K562 (cell line): ENCODE measurements at regions of chr6 and their contacts with region 1.

Region 1: DNA sequence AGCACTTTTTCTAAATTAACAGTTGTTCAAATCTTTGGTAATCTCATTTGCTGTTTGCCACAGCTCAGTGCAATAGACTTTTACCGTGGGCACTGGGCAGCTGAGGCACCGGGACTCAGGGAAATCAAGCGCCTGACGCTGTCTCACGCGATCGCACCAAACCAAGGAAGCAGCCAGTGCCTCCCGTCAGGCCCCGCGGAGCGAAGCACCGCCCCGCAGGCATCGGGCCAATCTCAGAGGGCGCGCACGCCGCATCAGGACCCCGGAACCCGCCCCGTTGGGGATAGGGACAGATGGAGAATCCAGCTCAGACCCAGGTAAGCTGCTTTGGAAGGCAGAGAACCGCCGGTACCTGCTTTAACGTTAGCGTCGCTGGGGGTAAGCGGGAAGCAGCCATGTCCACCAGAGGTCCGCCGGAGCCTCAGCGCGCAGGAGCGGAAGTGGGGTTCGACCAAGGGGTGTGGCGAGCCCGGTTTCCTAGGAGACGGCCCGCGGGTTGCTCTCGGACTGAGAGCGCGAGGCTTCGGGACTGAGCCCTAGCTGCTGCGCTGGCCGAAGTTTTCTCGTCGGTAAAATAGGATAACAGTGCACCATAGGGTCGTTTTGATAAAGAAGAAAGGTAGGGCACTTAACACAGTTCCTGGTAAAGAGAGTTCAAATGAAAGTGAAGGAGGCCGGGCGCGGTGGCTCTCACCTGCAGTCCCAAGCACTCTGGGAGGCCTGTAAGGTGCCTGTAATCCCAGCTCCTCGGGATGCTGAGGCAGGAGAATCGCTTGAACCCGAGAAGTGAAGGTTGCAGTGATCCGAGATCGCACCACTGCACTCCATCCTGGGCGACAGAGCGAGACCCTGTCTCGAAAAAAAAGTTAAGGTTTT is at the start of gene LYRM2:
- DNase-seq: peak; percentile 92 to 94 (median 94)
- ATAC-seq: peak; percentile 99
- H3K4me3 ChIP-seq: peak within 1 kb of the TSS; percentile 70
- H3K27ac ChIP-seq: peak within 1 kb of the TSS; percentile 85
- H3K4me1 ChIP-seq: peaks cover 0 to 4% of the 10 kb centered on the region in 2 experiments; a peak in 1 of 5 replicates
- H3K27me3 ChIP-seq: no peaks in the 10 kb centered on the region
- CTCF ChIP-seq: 0 out of 6 replicates have a peak, but pooled peaks of 1 of the 3 experiments have one; percentile 0
- EP300 ChIP-seq: no peak
- POLR2A ChIP-seq: peak; percentile 97
- RAD21 ChIP-seq: 0 out of 4 replicates have a peak, but pooled peaks of 1 of the 2 experiments have one; percentile 7
- polyA plus RNA-seq, gene LYRM2: 101 to 115 TPM

Region 2: DNA sequence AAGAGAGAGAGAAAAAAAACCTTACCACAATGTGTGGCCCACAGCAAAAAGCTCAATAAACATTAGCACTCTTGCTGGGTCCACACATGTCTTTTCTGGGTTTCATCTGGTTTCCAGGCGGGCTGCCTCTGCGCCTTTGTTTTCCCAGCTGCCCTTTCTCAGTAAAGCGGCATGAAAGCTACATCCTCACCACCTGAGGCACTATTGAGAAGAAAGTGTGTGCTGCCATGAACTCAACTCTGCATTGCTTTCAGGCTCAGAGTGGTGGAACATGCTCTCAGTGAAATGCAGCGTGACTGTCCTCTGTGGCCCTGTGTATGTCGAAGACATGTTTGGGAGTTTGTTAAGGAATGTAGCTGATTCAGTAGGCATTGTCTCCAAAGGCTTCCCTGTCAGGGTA is 102.3 kb before region 1 on chr6:
- CTCF ChIA-PET with region 1: no interaction called
- POLR2A ChIA-PET with region 1: no interaction called
- in situ Hi-C with region 1: no loop called
- intact Hi-C with region 1: no loop called
- DNase-seq: peak in 1 of 4 experiments; percentile 6
- ATAC-seq: peak; percentile 74
- H3K4me3 ChIP-seq: no peak overlapping the region
- H3K27ac ChIP-seq: no peak overlapping the region
- H3K4me1 ChIP-seq: no peaks in the 10 kb centered on the region
- H3K27me3 ChIP-seq: peaks cover 2 to 11% of the 10 kb centered on the region in 2 experiments; a peak in 3 of 5 replicates
- CTCF ChIP-seq: 0 out of 6 replicates have a peak, but pooled peaks of 2 of the 3 experiments have one; percentile 13 to 19
- EP300 ChIP-seq: no peak
- POLR2A ChIP-seq: no peak
- RAD21 ChIP-seq: no peak; a peak in 1 of 4 replicates

Region 3: GRCh38 chr6:89649672-89650071 is 11.1 kb after region 1 on chr6:
- CTCF ChIA-PET with region 1: no interaction called
- POLR2A ChIA-PET with region 1: interaction called, 15 read pairs
- in situ Hi-C with region 1: no loop called
- intact Hi-C with region 1: no loop called
- DNase-seq: no peak
- ATAC-seq: no peak
- H3K4me3 ChIP-seq: no peak overlapping the region
- H3K27ac ChIP-seq: no peak overlapping the region
- H3K4me1 ChIP-seq: no peaks in the 10 kb centered on the region
- H3K27me3 ChIP-seq: no peaks in the 10 kb centered on the region
- CTCF ChIP-seq: no peak
- EP300 ChIP-seq: no peak
- POLR2A ChIP-seq: no peak
- RAD21 ChIP-seq: no peak